ENCODE measurements at regions of chr15 and their contacts with region 1.

Region 1: GRCh38 chr15:26132811-26133210 is 269.7 kb upstream of the ATP10A start:
- DNase-seq: no peak
- ATAC-seq: no peak
- H3K4me3 ChIP-seq: no peak overlapping the region
- H3K27ac ChIP-seq: no peak overlapping the region
- H3K4me1 ChIP-seq: no peaks in the 10 kb centered on the region
- H3K27me3 ChIP-seq: peaks cover 0 to 39% (median 7%) of the 10 kb centered on the region in 7 donors
- CTCF ChIP-seq: no peak

Region 2: DNA sequence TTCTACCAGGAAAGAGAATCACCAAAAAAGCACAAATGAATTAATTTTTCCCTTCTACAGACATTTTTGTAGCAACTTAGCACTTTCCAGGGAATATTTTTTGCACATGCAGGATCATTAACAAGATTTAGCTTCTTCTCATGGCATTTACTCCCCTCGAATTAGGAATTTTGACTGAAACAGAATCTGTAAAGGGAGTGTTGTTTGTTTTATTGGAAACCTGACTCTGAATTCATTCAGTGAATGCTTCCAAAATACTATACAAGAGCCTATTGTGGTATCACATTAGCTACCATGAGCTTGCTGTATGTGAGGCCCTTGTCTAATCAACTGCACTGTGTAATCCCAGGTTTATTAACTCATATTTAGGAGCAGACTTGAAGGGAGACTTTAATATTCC is 139.3 kb before region 1 on chr15:
- intact Hi-C with region 1: no loop called
- DNase-seq: no peak
- ATAC-seq: no peak
- H3K4me3 ChIP-seq: no peak overlapping the region
- H3K27ac ChIP-seq: no peak overlapping the region
- H3K4me1 ChIP-seq: no peaks in the 10 kb centered on the region
- H3K27me3 ChIP-seq: no peaks in the 10 kb centered on the region
- CTCF ChIP-seq: no peak

Region 3: GRCh38 chr15:26065723-26066122 is 67.1 kb before region 1 on chr15:
- intact Hi-C with region 1: loop called in 1 of 10 experiments (anchors 10 kb)
- DNase-seq: no peak
- ATAC-seq: no peak
- H3K4me3 ChIP-seq: no peak overlapping the region
- H3K27ac ChIP-seq: no peak overlapping the region
- H3K4me1 ChIP-seq: no peaks in the 10 kb centered on the region
- H3K27me3 ChIP-seq: peaks cover 0 to 21% (median 0%) of the 10 kb centered on the region in 7 donors
- CTCF ChIP-seq: no peak

Region 4: GRCh38 chr15:26166429-26166828 is 33.6 kb after region 1 on chr15:
- intact Hi-C with region 1: no loop called
- DNase-seq: no peak
- ATAC-seq: no peak
- H3K4me3 ChIP-seq: no peak overlapping the region
- H3K27ac ChIP-seq: no peak overlapping the region
- H3K4me1 ChIP-seq: no peaks in the 10 kb centered on the region
- H3K27me3 ChIP-seq: peaks cover 0 to 3% (median 0%) of the 10 kb centered on the region in 7 donors
- CTCF ChIP-seq: no peak

Region 5: DNA sequence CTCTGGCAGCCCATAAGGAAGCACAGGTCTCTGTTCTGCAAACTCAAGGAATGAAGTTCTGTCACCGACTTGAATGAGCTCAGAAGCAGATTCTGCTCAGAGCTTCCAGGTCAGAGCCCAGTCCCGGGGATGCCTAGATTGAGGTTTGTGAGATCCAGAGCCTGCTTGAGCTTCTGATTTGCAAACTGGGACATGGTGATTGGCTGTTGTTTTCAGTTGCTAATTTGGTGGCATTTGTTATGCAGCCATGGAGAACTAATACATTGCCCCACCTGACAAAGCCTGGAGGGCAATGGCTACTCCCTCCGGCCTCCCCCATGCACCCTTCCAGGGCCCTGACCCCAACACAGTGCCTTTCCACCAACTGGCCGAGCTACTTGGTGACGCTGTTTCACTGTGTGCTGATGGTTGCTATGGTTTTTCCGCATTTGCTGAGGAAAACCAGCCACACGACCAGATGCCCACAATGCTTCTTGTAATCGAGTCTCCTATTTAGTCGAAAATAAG is 109.8 kb after region 1 on chr15:
- intact Hi-C with region 1: no loop called
- DNase-seq: no peak
- ATAC-seq: no peak
- H3K4me3 ChIP-seq: no peak overlapping the region
- H3K27ac ChIP-seq: no peak overlapping the region
- H3K4me1 ChIP-seq: no peaks in the 10 kb centered on the region
- H3K27me3 ChIP-seq: no peaks in the 10 kb centered on the region
- CTCF ChIP-seq: no peak